ENCODE measurements at regions of chr1 and their contacts with region 1.

Region 1: DNA sequence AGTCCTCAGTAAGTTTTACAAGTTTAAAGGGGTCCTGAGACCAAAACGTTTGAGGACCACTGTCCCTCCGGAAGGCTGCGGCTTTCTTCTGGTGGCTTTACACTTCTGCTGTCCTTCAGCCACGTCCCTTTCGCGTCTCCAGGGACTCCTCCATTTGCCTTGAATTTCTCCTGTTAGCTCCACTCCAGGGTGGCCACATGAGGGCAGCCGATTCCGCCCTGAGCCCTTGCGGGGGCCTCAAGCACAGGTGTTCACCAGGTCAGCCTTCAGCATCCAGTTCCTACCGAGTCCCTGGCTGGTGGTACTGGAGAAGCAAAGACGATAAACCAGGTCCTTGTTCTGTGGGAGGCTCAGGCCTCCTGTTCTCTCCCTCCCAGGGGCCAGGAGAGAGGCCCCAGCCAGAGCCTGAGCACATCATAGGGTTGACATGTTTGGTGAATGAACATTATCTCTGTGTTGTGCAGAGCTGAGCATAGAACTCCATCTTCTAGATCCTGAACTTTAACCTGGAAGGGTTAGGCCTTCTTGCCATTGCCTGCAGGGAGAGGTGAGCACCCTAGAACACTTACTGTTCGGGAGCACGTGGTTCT is 27.4 kb upstream of the COQ8A start:
- DNase-seq: no peak
- H3K4me3 ChIP-seq: no peak overlapping the region
- H3K27ac ChIP-seq: no peak overlapping the region
- H3K27me3 ChIP-seq: no peaks in the 10 kb centered on the region
- CTCF ChIP-seq: peak; percentile 47

Region 2: GRCh38 chr1:226940029-226940805 is 27.5 kb after region 1 on chr1 and contains the start of gene COQ8A:
- CTCF ChIA-PET with region 1: no interaction called
- POLR2A ChIA-PET with region 1: interaction called, 10 read pairs
- DNase-seq: peak; percentile 99
- H3K4me3 ChIP-seq: peak within 1 kb of the TSS; percentile 74
- H3K27ac ChIP-seq: peak within 1 kb of the TSS; percentile 99
- H3K27me3 ChIP-seq: peaks cover 4% of the 10 kb centered on the region
- CTCF ChIP-seq: no peak
- polyA plus RNA-seq, gene COQ8A: 5.0 and 5.3 TPM in 2 replicates

Region 3: DNA sequence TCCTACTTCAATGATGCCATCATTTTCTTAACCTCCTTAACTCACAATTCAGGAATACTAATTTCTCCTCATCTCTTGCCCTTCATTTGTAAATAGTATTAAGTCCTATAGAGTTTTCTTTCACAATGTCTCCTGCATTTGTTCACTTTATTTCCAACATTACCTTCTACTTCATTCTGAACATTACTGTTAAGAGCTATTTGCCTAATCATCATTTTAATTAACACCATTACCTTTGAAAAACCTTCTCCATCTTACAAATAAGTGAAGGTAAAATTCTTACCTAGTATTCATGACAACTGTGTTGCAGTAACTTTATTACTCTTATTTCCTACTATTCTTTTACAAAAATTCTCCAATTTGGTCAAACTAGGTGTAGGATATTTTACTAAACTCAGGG is 165.1 kb after region 1 on chr1:
- CTCF ChIA-PET with region 1: no interaction called
- POLR2A ChIA-PET with region 1: no interaction called
- DNase-seq: no peak
- H3K4me3 ChIP-seq: no peak overlapping the region
- H3K27ac ChIP-seq: no peak overlapping the region
- H3K27me3 ChIP-seq: no peaks in the 10 kb centered on the region
- CTCF ChIP-seq: no peak

Region 4: GRCh38 chr1:227734856-227735538 is 822.3 kb after region 1 on chr1 and contains the starts of genes JMJD4 and SNAP47:
- CTCF ChIA-PET with region 1: no interaction called
- POLR2A ChIA-PET with region 1: no interaction called
- DNase-seq: peak; percentile 80
- H3K4me3 ChIP-seq: peak within 1 kb of the TSS; percentile 99
- H3K27ac ChIP-seq: peak within 1 kb of the TSS; percentile 31
- H3K27me3 ChIP-seq: no peaks in the 10 kb centered on the region
- CTCF ChIP-seq: no peak
- polyA plus RNA-seq, gene JMJD4: 13.4 and 20.1 TPM in 2 replicates
- polyA plus RNA-seq, gene SNAP47: 41.5 and 44.8 TPM in 2 replicates

Measured in AG04450 (cell line).